ENCODE measurements at regions of chr5 and their contacts with region 1.

Region 1: GRCh38 chr5:40518511-40518967 is 161.2 kb upstream of the PTGER4 start:
- DNase-seq: no peak
- H3K4me3 ChIP-seq: no peak overlapping the region
- H3K27ac ChIP-seq: no peak overlapping the region
- H3K4me1 ChIP-seq: peaks cover 13 to 30% (median 22%) of the 10 kb centered on the region in 4 experiments
- H3K27me3 ChIP-seq: no peaks in the 10 kb centered on the region

Region 2: GRCh38 chr5:40507095-40507494 is 11.4 kb before region 1 on chr5:
- CTCF ChIA-PET with region 1: interaction called, 10 read pairs
- POLR2A ChIA-PET with region 1: no interaction called
- DNase-seq: peak; percentile 32 to 52 (median 48)
- H3K4me3 ChIP-seq: no peak overlapping the region
- H3K27ac ChIP-seq: no peak overlapping the region
- H3K4me1 ChIP-seq: peaks cover 10 to 25% (median 17%) of the 10 kb centered on the region in 4 experiments
- H3K27me3 ChIP-seq: no peaks in the 10 kb centered on the region

Measured in common myeloid progenitor, CD34-positive (primary cell).